H1 (cell line): ENCODE measurements at regions of chr11 and their contacts with region 1.

Region 1: DNA sequence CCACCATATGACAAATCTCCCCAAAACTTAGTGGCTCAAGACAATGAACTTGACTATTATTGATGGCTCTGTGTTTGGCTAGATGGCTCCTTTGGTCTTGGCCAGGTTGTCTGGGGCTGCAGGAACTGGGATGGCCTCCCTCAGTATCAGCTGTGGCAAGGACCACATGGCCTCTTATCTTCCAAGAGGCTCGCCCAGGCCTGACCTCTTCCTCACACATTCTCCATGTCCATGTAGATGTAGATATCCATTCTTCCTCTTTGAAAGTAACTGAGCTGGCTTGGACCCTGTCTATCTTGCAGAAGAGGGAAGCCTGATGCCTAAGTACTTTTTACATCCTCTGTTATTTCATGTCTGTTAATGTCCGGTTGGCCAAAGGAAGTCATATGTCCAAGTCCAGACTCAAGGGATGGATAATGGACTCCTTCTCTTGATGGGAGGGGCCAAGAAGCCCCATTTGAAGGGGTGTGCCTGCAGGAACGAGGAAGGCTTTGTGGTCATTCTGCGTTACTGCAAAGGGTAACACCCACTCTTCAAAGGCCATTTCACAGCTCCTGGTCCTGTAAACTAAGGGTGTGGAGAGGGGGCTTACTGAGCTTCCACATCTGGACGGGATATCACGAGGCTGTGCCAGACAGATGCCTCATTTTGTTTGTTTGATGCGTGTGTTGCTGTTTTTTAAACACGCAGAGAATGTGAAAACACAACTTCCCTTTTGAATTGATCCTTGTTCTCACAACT is 87.1 kb downstream of the GRIK4 start:
- DNase-seq: no peak
- H3K4me3 ChIP-seq: no peak overlapping the region
- H3K27ac ChIP-seq: no peak overlapping the region
- H3K4me1 ChIP-seq: peaks cover 2 to 15% (median 7%) of the 10 kb centered on the region in 4 experiments; a peak in 6 of 7 replicates
- H3K27me3 ChIP-seq: no peaks in the 10 kb centered on the region
- CTCF ChIP-seq: no peak
- EP300 ChIP-seq: no peak
- POLR2A ChIP-seq: no peak
- RAD21 ChIP-seq: no peak

Region 2: DNA sequence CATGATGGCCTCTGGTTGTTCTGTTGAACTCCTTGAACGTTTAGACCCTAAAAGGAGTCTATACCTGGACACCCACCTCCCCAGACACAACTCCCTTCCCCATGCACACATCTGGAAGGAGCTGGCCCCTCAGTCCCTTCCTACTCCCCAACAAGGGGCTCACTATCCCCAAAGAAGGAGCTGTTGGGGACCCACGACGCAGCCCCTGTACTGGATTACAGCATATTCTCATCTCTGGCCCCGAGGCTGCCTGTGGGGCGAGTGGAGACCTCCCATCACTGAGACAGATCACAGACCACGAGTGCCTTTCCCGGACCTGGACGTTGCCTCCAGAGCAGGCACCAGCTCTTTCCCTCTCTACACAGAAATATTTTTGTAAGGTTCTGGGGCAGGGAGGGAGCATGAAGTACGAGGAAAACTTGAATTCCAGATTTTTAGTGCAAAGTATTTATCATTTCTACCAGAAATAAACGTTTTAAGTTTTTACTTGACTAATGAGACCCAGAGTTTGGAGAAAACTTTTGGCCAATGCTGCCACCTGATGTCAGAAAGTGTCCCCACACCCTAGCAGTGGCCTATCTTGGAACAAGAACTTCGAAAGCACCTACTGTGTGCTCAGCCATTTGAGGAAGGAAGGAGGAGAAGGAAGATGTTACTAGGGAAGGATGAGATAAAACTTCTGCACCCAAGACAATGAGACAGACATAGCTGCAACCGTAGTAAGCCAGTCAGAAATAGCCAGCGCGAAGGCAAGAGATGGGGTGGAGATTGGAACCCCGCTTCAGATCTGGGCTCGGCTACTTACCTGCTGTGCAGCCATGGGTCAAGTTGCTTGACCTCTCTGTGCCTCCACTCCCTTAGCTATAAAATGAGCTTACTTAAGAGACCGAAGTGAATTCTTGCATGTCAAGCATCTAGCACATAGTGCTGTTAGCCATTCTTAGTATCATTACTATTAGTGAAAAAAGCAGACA is 368.9 kb before region 1 on chr11:
- CTCF ChIA-PET with region 1: no interaction called
- POLR2A ChIA-PET with region 1: no interaction called
- DNase-seq: no peak
- H3K4me3 ChIP-seq: no peak overlapping the region
- H3K27ac ChIP-seq: no peak overlapping the region
- H3K4me1 ChIP-seq: peaks cover 0 to 3% (median under 1%) of the 10 kb centered on the region in 4 experiments; a peak in 3 of 7 replicates
- H3K27me3 ChIP-seq: 0 out of 7 replicates have a peak, but pooled peaks cover 0 to 3% (median 0%) of the 10 kb centered on the region in 4 experiments
- CTCF ChIP-seq: peak; percentile 39 to 74 (median 70)
- EP300 ChIP-seq: no peak
- POLR2A ChIP-seq: no peak
- RAD21 ChIP-seq: peak; percentile 86

Region 3: DNA sequence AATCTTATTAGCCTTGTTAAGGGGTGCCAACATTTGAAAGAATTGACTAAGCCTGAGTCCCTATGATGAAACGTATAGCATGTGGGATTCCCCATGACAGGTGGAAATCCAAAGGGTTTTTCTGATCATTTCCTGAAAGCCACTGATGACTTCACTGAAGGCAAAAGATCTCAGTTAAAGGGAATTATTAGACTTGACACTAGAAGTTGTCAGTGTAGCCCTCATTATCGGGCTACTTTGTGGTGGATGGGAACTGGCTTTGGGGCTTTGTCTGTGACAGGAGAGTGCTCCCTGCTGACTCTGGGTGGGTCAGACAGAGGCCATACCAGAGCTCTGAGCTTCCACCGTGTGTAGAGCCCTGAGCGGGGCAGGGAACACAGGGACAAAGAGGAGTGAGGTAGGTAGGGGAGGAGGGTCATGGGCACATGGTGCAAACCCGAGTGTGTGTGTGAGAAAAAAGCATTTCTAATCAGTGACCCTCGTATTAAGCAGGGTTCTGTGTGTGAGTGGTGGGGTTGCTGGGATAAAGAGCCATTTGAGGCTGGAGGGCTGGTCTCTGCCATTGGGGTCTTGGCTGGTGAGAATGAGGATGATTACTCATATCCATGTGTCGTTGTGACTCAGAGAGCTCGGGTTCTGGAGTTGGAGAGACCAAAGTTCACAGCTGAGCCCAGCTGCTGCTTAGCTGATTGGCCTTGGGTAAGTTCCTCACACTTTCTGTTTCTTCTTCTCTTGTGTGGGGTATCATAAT is 14.0 kb after region 1 on chr11:
- CTCF ChIA-PET with region 1: interaction called, 10 read pairs
- POLR2A ChIA-PET with region 1: interaction called, 4 read pairs
- DNase-seq: no peak
- H3K4me3 ChIP-seq: no peak overlapping the region
- H3K27ac ChIP-seq: no peak overlapping the region
- H3K4me1 ChIP-seq: peaks cover 0 to 14% (median 6%) of the 10 kb centered on the region in 4 experiments; a peak in 5 of 7 replicates
- H3K27me3 ChIP-seq: peaks cover 0 to under 1% (median 0%) of the 10 kb centered on the region in 4 experiments; a peak in 1 of 7 replicates
- CTCF ChIP-seq: no peak
- EP300 ChIP-seq: no peak
- POLR2A ChIP-seq: no peak
- RAD21 ChIP-seq: no peak